SK-N-SH (cell line): ENCODE measurements at regions of chr18 and their contacts with region 1.

Region 1: GRCh38 chr18:48859311-48860268 is 91.2 kb downstream of the SMAD7 start:
- DNase-seq: peak; percentile 92
- H3K4me3 ChIP-seq: no peak overlapping the region; a peak in 1 of 4 replicates
- H3K27ac ChIP-seq: peak overlapping the region in 1 of 2 experiments; percentile 99; a peak in 2 of 4 replicates
- H3K4me1 ChIP-seq: peaks cover 3 to 42% of the 10 kb centered on the region in 2 experiments; a peak in 3 of 4 replicates
- H3K27me3 ChIP-seq: no peaks in the 10 kb centered on the region
- CTCF ChIP-seq: no peak
- EP300 ChIP-seq: peak in 1 of 2 experiments; percentile 42; a peak in 1 of 4 replicates
- RAD21 ChIP-seq: peak; percentile 20

Region 2: DNA sequence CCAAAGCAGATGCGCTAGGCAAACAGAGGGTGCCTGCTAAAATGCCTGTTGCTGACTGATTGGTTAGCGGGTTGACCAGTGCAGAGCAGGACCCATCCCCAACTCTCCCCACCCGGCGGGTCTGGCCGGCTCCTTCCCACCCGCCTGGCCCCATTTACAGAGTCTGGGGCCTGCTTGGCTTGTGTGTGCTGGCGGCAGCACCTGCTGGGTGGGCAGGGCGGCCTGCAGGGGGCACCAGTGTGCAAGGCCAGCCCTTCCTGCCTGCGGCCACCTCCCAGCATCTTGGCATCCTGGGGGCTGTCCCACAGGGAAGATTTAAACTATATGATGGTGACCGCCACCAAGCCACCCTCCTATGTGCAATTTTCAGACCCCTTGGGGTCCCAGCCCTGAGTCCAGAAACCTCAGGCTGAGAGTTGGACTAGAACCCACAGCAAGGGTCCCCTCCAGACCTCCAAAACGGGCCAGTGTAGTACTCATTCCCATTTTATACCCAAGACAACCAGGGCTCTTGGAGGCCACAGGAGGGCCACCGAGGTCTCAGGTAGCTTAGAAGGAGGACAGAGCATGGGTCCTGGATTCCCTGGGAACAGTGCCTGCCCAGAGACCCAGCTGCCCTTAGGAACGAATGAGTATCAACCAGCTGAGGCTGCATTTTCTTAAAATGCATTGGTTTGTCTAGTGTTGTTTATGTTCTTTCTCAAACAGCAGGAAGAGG is 82.4 kb before region 1 on chr18:
- CTCF ChIA-PET with region 1: interaction called, 21 read pairs
- POLR2A ChIA-PET with region 1: interaction called, 3 read pairs
- DNase-seq: peak; percentile 90
- H3K4me3 ChIP-seq: no peak overlapping the region; a peak in 1 of 4 replicates
- H3K27ac ChIP-seq: peak overlapping the region; percentile 9 to 58; a peak in 3 of 4 replicates
- H3K4me1 ChIP-seq: peaks cover 33 to 58% of the 10 kb centered on the region in 2 experiments
- H3K27me3 ChIP-seq: no peaks in the 10 kb centered on the region
- CTCF ChIP-seq: peak; percentile 86
- EP300 ChIP-seq: no peak
- RAD21 ChIP-seq: peak; percentile 84

Region 3: DNA sequence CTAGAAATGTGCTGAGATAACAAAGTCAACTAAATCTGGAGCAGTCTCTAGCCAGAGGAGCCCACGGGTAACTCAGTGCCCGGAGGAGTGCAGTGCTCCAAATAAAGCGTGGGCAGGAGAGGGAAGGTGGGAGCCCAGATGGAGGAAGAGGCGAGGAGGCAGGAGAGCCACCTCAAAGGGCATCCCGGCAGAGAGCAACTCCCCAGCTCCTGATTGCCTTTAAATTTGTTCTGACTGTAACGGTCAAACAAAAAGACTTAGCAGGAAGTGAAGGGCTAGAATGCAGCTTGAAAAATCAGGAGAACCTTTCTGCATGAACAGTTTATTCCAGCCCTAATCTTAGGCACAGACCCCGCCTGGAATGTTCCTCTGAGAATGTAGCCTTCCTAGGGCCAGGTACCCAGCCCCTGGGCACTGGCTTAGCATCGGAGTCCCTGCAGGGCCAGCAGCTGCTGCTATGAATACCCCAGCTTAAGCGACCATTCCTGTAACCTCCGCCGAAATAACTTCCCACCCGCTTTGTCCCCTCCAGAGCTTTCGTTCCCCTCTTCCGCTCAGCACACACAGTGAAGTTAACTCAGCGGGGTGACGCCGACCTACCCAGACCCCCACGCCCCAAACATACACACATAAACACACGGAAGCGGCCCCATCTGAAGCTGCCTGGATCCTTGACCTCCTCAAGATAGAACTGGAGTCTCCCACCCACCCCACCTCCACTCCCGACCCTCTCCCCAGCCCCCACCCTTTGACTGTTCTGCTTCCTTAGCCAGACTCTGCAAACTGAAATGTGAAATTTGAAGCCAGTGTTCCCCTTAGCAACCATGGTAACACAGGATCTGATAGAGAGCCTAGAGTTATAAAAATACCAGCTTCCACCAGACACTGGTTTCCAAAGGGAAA is 32.0 kb before region 1 on chr18:
- CTCF ChIA-PET with region 1: interaction called, 11 read pairs
- POLR2A ChIA-PET with region 1: no interaction called
- DNase-seq: peak; percentile 73
- H3K4me3 ChIP-seq: peak overlapping the region in 1 of 2 experiments; percentile 28; a peak in 1 of 4 replicates
- H3K27ac ChIP-seq: peak overlapping the region; percentile 94 to 95
- H3K4me1 ChIP-seq: peaks cover 40 to 47% of the 10 kb centered on the region in 2 experiments
- H3K27me3 ChIP-seq: no peaks in the 10 kb centered on the region
- CTCF ChIP-seq: no peak
- EP300 ChIP-seq: no peak
- RAD21 ChIP-seq: peak; percentile 22; the same call in 1 of the 2 replicates

Region 4: DNA sequence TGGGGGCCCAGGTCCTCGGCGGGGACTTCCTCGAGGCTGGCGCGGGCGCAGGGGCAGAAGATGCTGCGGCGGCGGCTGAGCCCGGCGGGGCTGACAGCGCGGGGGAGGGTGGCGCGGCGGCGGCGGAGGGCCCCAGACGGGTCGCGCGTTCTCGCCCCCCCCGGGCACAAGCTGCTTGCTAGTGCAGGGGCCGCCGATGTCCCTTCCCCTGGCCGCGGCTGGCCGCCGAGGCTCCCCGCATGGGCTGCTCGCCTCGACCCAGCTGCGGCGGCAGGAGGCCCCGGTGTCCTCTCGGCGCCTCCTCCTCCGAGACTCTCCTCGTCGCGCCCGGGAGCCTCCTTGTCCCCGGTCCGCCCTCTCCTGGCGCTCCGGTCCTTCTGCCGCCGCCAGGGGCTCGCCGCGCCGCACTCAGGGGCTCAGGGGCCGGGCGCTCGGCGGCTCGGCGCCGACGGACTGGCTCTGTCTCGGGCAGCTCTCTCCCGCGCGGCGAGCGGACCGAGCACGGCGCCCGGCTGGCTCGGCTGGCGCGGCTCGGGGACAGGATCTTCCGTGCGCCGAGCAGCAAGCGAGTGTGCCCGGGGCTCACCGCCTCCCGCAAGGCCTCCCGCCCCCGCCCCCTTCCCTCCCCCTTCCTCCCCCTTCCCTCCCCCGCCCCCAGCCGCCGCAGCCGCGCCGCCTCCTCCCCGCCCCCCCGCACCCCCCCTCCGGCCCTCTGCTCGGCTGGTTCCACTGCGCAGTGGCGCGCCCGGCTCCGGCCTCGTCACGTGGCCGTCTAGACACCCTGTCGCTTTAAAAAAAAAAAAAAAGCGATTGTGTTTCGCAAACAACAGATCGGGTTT is 92.1 kb after region 1 on chr18:
- CTCF ChIA-PET with region 1: interaction called, 16 read pairs
- POLR2A ChIA-PET with region 1: interaction called, 11 read pairs
- DNase-seq: peak; percentile 92
- H3K4me3 ChIP-seq: peak overlapping the region; percentile 92 to 98
- H3K27ac ChIP-seq: peak overlapping the region; percentile 100
- H3K4me1 ChIP-seq: peaks cover 17 to 20% of the 10 kb centered on the region in 2 experiments
- H3K27me3 ChIP-seq: no peaks in the 10 kb centered on the region
- CTCF ChIP-seq: no peak; the same call in 1 of the 2 replicates
- EP300 ChIP-seq: peak in 1 of 2 experiments; percentile 51; a peak in 1 of 4 replicates
- RAD21 ChIP-seq: 0 out of 2 replicates have a peak, but pooled peaks have one; percentile 6